Dorsolateral prefrontal cortex (tissue), 120 donors: ENCODE measurements at regions of chr2 and their contacts with region 1.

Region 1: DNA sequence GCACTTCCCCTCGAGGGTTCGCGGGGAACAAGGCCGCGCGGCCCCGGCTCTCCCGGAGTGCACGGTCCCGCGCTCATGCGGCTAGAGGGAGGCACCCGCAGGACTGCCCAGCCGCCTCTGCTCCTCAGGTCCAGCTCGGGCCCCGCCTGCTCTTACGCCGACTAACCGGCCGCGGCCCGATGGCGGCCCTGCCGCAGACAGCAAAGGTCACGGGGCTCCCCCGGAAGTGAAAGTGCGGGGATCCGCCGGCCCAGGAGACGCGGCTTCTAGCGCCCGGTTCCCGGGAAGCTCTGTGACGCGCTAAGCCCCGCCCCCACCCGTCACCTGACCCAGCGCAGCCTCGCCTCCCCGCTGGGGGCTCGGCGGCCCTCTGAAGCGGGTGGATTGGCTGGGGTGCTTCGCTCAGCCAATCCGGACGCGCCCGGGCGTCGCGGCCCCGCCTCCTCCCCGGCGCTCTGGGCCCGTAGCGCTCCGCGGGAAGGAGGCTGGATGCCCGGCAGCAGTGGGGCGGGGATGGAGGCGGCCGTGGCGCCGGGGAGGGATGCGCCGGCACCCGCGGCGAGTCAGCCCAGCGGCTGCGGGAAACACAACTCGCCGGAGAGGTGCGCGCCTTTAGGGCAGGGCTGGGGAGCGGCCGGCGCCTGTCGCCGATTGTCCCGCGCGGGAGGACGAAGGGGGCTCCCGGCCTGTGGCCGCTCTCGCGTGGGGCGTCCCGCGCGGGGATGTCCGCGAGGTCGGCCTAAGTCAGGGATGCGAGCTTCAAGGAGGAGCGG is at the start of gene SCLY:
- DNase-seq: peak; percentile 96 to 99 (median 98)
- H3K4me3 ChIP-seq: peak within 1 kb of the TSS; percentile 78 to 99 (median 95)
- H3K27ac ChIP-seq: peak within 1 kb of the TSS; percentile 64 to 96 (median 90)
- H3K27me3 ChIP-seq: no peaks in the 10 kb centered on the region
- CTCF ChIP-seq: peak in 32 of 56 donors; percentile 9 to 57 (median 26)
- total RNA-seq, gene SCLY: 12.6 to 37.0 (median 22.2) TPM

Region 2: GRCh38 chr2:238010572-238010971 is 50.2 kb before region 1 on chr2:
- intact Hi-C with region 1: loop called in 1 of 2 experiments (anchors 5 kb)
- DNase-seq: no peak
- H3K4me3 ChIP-seq: no peak overlapping the region
- H3K27ac ChIP-seq: peak overlapping the region in 26 of 59 donors; percentile 20 to 98 (median 88)
- H3K27me3 ChIP-seq: no peaks in the 10 kb centered on the region
- CTCF ChIP-seq: no peak

Region 3: DNA sequence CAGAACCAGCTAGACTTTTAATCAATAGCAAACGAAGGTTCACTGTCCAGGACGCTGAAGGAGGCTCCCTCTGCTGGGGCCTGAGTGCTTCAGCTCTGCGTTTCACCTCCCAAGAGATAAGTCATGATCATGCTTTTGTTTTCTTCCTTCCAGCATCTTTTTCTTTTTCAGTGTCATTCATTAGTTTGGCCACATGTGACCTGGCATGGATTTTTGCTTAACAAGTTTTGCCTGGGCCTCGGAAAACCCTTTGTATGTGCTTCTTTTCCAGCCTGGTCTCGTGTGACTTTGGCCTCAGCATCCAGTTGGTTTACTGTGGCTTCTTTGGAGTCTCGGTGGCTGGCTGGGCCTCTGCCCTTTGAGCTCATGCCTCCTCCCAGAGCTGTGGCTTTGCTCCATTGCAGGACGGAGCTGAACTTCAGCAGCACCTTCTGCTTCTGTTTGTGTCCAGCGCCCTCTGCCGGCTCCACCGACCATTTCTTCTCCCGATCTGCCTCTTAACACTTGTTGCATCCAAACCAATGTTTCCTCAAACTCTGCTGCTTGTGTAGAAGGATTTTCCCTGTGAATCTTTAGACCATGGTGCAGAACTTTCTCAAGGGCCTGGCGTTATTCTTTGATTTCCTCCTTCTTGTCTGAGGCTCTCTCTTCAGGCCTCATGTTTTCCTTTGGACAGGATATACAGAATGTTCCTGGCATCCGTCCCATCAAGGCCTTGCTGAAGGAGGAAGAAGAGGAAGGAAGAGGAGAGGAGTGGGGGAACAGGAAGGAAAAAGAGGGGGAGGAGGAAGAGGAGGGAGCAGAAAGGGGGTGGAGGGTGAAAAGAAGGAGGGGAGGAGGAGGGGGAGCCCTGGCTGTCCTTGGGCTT is 202.7 kb after region 1 on chr2:
- intact Hi-C with region 1: loop called in 1 of 2 experiments (anchors 2 kb)
- DNase-seq: peak; percentile 85 to 98 (median 94)
- H3K4me3 ChIP-seq: peak overlapping the region in 1 of 59 donors; percentile 7
- H3K27ac ChIP-seq: peak overlapping the region in 42 of 59 donors; percentile 1 to 78 (median 56)
- H3K27me3 ChIP-seq: no peaks in the 10 kb centered on the region
- CTCF ChIP-seq: peak; percentile 50 to 95 (median 88)

Region 4: GRCh38 chr2:238493880-238494572 is 433.3 kb after region 1 on chr2:
- intact Hi-C with region 1: no loop called
- DNase-seq: no peak
- H3K4me3 ChIP-seq: no peak overlapping the region
- H3K27ac ChIP-seq: no peak overlapping the region
- H3K27me3 ChIP-seq: no peaks in the 10 kb centered on the region
- CTCF ChIP-seq: no peak